Activated B cell treated with CpG ODN at 0.5 μM for 24 hours (primary cell): ENCODE measurements at regions of chr7 and their contacts with region 1.

Region 1: GRCh38 chr7:51162724-51163329 is 153.8 kb downstream of the COBL start:
- DNase-seq: peak; percentile 18
- ATAC-seq: peak; percentile 77
- H3K4me3 Mint-ChIP-seq: no peak overlapping the region
- H3K27ac Mint-ChIP-seq: no peak overlapping the region
- H3K4me1 Mint-ChIP-seq: peaks cover 7% of the 10 kb centered on the region
- H3K27me3 Mint-ChIP-seq: peaks cover 10% of the 10 kb centered on the region
- CTCF ChIP-seq: peak; percentile 20

Region 2: DNA sequence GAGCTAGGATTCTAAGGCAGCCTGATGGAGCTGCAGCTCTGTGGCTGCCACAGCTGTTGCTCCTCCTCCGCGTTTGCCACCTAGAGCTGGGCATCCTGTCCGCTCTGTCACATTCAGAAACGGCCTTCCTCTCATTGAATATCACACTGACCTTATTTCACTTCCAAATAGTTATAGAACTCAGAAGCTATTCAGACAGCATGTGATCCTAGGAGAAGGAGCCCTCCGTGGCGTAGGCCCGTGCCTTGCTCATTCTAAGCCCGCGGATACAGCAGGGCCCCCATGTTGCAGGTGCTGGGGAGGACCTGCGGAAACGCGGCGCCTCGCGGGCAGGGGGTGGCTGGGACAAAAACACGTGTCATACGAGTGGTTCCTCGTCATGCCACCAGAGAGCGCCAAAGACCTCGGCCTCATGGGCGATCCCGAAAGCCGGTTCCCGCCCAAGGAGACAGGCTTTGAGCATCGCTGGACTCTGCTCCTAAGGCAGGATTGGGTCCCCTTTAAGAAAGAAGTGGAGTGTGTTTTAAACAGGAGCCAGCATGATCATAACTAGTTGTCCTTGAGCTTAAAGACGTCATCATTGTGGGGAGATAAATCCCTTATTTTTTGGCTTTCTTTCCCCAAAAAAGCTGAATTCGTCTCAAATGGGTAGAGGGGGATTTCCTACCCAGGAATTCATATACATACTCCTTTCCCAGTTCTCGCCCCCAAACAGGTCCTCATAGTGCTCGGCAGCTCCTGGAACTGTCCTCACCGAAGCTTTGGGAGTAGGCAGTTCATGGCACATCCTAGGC is 694.8 kb before region 1 on chr7:
- CTCF ChIA-PET with region 1: interaction called, 15 read pairs
- POLR2A ChIA-PET with region 1: no interaction called
- intact Hi-C with region 1: loop called (anchors 1 kb)
- DNase-seq: peak; percentile 61
- ATAC-seq: peak; percentile 93
- H3K4me3 Mint-ChIP-seq: peak overlapping the region; percentile 45
- H3K27ac Mint-ChIP-seq: no peak overlapping the region
- H3K4me1 Mint-ChIP-seq: peaks cover 8% of the 10 kb centered on the region
- H3K27me3 Mint-ChIP-seq: no peaks in the 10 kb centered on the region
- CTCF ChIP-seq: peak; percentile 43

Region 3: GRCh38 chr7:51060536-51060935 is 102.3 kb before region 1 on chr7:
- CTCF ChIA-PET with region 1: no interaction called
- POLR2A ChIA-PET with region 1: no interaction called
- intact Hi-C with region 1: no loop called
- DNase-seq: no peak
- ATAC-seq: no peak
- H3K4me3 Mint-ChIP-seq: no peak overlapping the region
- H3K27ac Mint-ChIP-seq: no peak overlapping the region
- H3K4me1 Mint-ChIP-seq: no peaks in the 10 kb centered on the region
- H3K27me3 Mint-ChIP-seq: no peaks in the 10 kb centered on the region
- CTCF ChIP-seq: no peak

Region 4: DNA sequence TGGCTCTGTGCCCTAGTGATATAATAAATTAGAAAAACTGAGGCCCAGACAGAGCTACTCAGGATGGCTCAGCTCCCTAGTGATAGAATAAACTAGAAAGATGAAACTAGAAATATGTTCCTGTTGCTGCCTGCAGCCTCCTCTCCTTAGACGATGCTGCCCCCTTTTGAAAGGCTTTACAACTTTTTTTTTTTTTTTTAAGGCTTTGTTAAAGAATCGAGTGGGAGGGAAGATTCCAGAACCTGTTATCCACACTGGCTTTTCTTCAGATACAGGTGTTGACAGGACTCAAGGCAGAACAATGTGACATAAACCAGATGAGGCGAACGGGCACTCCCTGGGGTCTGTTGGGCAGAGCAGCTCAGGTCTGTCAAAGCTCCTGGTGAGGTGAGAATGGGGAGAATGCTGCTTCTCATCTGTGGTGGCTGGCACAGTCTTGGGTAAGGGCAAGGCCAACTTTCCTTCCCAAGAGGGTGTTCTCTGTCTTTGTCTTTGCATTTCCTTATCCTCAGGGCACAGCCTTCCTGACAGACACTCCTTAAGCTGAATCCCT is 21.3 kb before region 1 on chr7:
- CTCF ChIA-PET with region 1: interaction called, 14 read pairs
- POLR2A ChIA-PET with region 1: no interaction called
- intact Hi-C with region 1: no loop called
- DNase-seq: no peak
- ATAC-seq: no peak
- H3K4me3 Mint-ChIP-seq: no peak overlapping the region
- H3K27ac Mint-ChIP-seq: no peak overlapping the region
- H3K4me1 Mint-ChIP-seq: peaks cover 2% of the 10 kb centered on the region
- H3K27me3 Mint-ChIP-seq: peaks cover 7% of the 10 kb centered on the region
- CTCF ChIP-seq: no peak

Region 5: DNA sequence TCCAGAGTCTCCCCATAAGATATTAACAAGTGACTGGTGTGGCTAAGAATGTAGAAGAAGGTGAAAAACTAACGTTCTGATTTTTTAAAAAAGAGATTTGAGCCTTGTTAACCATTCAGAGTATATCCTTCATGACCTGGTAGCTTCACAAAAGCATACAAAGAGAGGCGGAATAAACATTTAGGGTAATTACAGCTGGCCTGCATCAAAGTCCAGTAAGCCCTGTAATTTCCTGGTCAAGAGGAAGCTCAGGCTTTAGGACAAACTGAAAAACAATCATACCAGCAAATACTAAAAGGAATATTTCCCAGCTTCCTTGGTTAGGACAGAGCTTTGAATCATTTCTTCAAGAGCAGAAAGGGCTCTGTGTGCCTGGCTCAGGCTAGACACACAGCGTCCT is 11.4 kb before region 1 on chr7:
- CTCF ChIA-PET with region 1: interaction called, 12 read pairs
- POLR2A ChIA-PET with region 1: no interaction called
- intact Hi-C with region 1: no loop called
- DNase-seq: no peak
- ATAC-seq: no peak
- H3K4me3 Mint-ChIP-seq: no peak overlapping the region
- H3K27ac Mint-ChIP-seq: no peak overlapping the region
- H3K4me1 Mint-ChIP-seq: peaks cover 4% of the 10 kb centered on the region
- H3K27me3 Mint-ChIP-seq: peaks cover 8% of the 10 kb centered on the region
- CTCF ChIP-seq: no peak

Region 6: DNA sequence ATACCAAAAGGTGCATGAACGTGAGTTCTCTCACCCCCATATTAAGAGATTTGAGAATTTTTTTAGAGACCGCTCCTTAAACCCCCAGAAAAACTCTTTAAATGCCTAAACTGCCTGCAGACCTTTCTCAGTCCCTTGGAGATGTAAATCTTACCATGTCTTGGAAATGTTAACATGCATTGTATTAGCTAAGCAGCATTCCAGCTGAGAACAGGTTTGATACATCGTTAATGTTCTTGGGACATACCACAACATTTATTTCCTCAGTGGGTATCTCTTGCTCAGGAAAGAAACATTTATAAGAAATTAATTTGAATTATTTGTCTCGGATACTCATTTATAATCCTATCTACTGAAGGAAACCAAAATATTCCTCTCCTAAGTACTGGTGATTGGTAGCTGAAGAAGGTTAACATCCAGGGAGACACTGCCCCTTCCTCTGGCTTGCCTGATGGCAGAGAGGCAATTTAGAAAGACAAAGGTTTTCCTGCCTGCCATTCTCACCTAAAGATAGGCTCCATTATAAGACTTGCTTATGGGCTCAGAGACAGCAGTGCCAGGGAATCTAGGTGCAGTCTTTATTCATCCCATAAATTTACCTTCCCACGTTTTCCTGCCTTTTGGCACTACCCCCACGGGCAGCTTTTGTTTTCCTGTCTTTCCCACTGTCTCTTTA is 12.6 kb after region 1 on chr7:
- CTCF ChIA-PET with region 1: interaction called, 10 read pairs
- POLR2A ChIA-PET with region 1: no interaction called
- intact Hi-C with region 1: no loop called
- DNase-seq: no peak
- ATAC-seq: no peak
- H3K4me3 Mint-ChIP-seq: no peak overlapping the region
- H3K27ac Mint-ChIP-seq: no peak overlapping the region
- H3K4me1 Mint-ChIP-seq: no peaks in the 10 kb centered on the region
- H3K27me3 Mint-ChIP-seq: no peaks in the 10 kb centered on the region
- CTCF ChIP-seq: no peak

Region 7: GRCh38 chr7:51366930-51367613 is 204.2 kb after region 1 on chr7:
- CTCF ChIA-PET with region 1: interaction called, 5 read pairs
- POLR2A ChIA-PET with region 1: no interaction called
- intact Hi-C with region 1: loop called (anchors 2 kb)
- DNase-seq: no peak
- ATAC-seq: no peak
- H3K4me3 Mint-ChIP-seq: no peak overlapping the region
- H3K27ac Mint-ChIP-seq: no peak overlapping the region
- H3K4me1 Mint-ChIP-seq: no peaks in the 10 kb centered on the region
- H3K27me3 Mint-ChIP-seq: no peaks in the 10 kb centered on the region
- CTCF ChIP-seq: no peak